ENCODE measurements at regions of chr2 and their contacts with region 1.

Region 1: GRCh38 chr2:106085181-106085940 is 108.7 kb downstream of the UXS1 start:
- DNase-seq: peak; percentile 39 to 79 (median 60)
- ATAC-seq: peak; percentile 91 to 96 (median 92)
- H3K4me3 ChIP-seq: no peak overlapping the region
- H3K4me3 Mint-ChIP-seq: peak overlapping the region; percentile 49 to 72 (median 57)
- H3K27ac ChIP-seq: peak overlapping the region; percentile 61
- H3K27ac Mint-ChIP-seq: peak overlapping the region; percentile 93 to 94
- H3K4me1 ChIP-seq: peaks cover 25 to 28% of the 10 kb centered on the region in 2 experiments
- H3K4me1 Mint-ChIP-seq: peaks cover 65 to 73% (median 70%) of the 10 kb centered on the region in 3 donors
- H3K27me3 ChIP-seq: no peaks in the 10 kb centered on the region
- H3K27me3 Mint-ChIP-seq: no peaks in the 10 kb centered on the region

Region 2: GRCh38 chr2:105712981-105713596 is 372.3 kb before region 1 on chr2:
- CTCF ChIA-PET with region 1: no interaction called
- POLR2A ChIA-PET with region 1: no interaction called
- DNase-seq: no peak
- ATAC-seq: no peak
- H3K4me3 ChIP-seq: no peak overlapping the region
- H3K4me3 Mint-ChIP-seq: no peak overlapping the region
- H3K27ac ChIP-seq: no peak overlapping the region
- H3K27ac Mint-ChIP-seq: no peak overlapping the region
- H3K4me1 ChIP-seq: no peaks in the 10 kb centered on the region
- H3K4me1 Mint-ChIP-seq: no peaks in the 10 kb centered on the region
- H3K27me3 ChIP-seq: peaks cover 0 to 7% of the 10 kb centered on the region in 2 experiments
- H3K27me3 Mint-ChIP-seq: no peaks in the 10 kb centered on the region

Region 3: GRCh38 chr2:105734762-105735538 is 350.4 kb before region 1 on chr2:
- CTCF ChIA-PET with region 1: no interaction called
- POLR2A ChIA-PET with region 1: no interaction called
- DNase-seq: no peak
- ATAC-seq: no peak
- H3K4me3 ChIP-seq: no peak overlapping the region
- H3K4me3 Mint-ChIP-seq: no peak overlapping the region
- H3K27ac ChIP-seq: no peak overlapping the region
- H3K27ac Mint-ChIP-seq: peak overlapping the region; percentile 21 to 82
- H3K4me1 ChIP-seq: peaks cover 20 to 31% of the 10 kb centered on the region in 2 experiments
- H3K4me1 Mint-ChIP-seq: peaks cover 51 to 76% (median 68%) of the 10 kb centered on the region in 3 donors
- H3K27me3 ChIP-seq: no peaks in the 10 kb centered on the region
- H3K27me3 Mint-ChIP-seq: no peaks in the 10 kb centered on the region

Region 4: GRCh38 chr2:105765415-105766299 is 319.7 kb before region 1 on chr2:
- CTCF ChIA-PET with region 1: no interaction called
- POLR2A ChIA-PET with region 1: interaction called in 1 of 2 experiments, 11 read pairs
- DNase-seq: peak in 9 of 35 experiments; percentile 17 to 61 (median 49)
- ATAC-seq: peak; percentile 38 to 60 (median 47)
- H3K4me3 ChIP-seq: no peak overlapping the region
- H3K4me3 Mint-ChIP-seq: peak overlapping the region in 2 of 3 donors; percentile 44 to 61
- H3K27ac ChIP-seq: peak overlapping the region; percentile 64
- H3K27ac Mint-ChIP-seq: peak overlapping the region; percentile 92
- H3K4me1 ChIP-seq: peaks cover 52 to 88% of the 10 kb centered on the region in 2 experiments
- H3K4me1 Mint-ChIP-seq: peaks cover 97 to 99% (median 98%) of the 10 kb centered on the region in 3 donors
- H3K27me3 ChIP-seq: no peaks in the 10 kb centered on the region
- H3K27me3 Mint-ChIP-seq: no peaks in the 10 kb centered on the region

Region 5: GRCh38 chr2:106065268-106065982 is 19.9 kb before region 1 on chr2:
- CTCF ChIA-PET with region 1: interaction called in 1 of 2 experiments, 5 read pairs
- POLR2A ChIA-PET with region 1: interaction called in 1 of 2 experiments, 10 read pairs
- DNase-seq: peak in 17 of 35 experiments; percentile 9 to 44 (median 20)
- ATAC-seq: peak; percentile 61 to 77 (median 72)
- H3K4me3 ChIP-seq: peak overlapping the region; percentile 49 to 69
- H3K4me3 Mint-ChIP-seq: peak overlapping the region; percentile 69 to 82 (median 78)
- H3K27ac ChIP-seq: no peak overlapping the region
- H3K27ac Mint-ChIP-seq: peak overlapping the region; percentile 31 to 68
- H3K4me1 ChIP-seq: peaks cover 6 to 22% of the 10 kb centered on the region in 2 experiments
- H3K4me1 Mint-ChIP-seq: peaks cover 25 to 53% (median 27%) of the 10 kb centered on the region in 3 donors
- H3K27me3 ChIP-seq: peaks cover 6 to 20% of the 10 kb centered on the region in 2 experiments
- H3K27me3 Mint-ChIP-seq: peaks cover 0 to 20% of the 10 kb centered on the region in 2 donors

Region 6: DNA sequence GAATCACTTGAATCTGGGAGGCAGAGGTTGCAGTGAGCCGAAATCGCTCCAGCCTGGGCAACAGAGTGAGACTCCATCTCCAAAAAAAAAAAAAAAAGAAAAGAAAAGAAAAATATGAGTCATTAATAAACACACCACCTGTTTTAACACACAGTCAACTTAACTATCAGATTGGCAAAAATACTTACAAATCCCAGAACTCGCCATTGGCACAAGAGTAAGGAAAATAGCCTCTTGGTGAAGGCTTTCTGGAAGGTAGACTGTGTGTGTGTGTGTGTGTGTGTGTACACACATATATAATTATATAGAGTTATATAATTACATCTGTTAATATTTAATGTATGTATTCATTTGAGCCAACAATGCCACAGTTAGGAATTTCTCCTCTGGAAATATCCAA is 172.5 kb after region 1 on chr2:
- CTCF ChIA-PET with region 1: no interaction called
- POLR2A ChIA-PET with region 1: no interaction called
- DNase-seq: no peak
- ATAC-seq: no peak
- H3K4me3 ChIP-seq: no peak overlapping the region
- H3K4me3 Mint-ChIP-seq: no peak overlapping the region
- H3K27ac ChIP-seq: no peak overlapping the region
- H3K27ac Mint-ChIP-seq: no peak overlapping the region
- H3K4me1 ChIP-seq: no peaks in the 10 kb centered on the region
- H3K4me1 Mint-ChIP-seq: no peaks in the 10 kb centered on the region
- H3K27me3 ChIP-seq: peaks cover 0 to 10% of the 10 kb centered on the region in 2 experiments
- H3K27me3 Mint-ChIP-seq: peaks cover 0 to 2% of the 10 kb centered on the region in 2 donors